Natural killer cell (primary cell): ENCODE measurements at regions of chr19 and their contacts with region 1.

Region 1: DNA sequence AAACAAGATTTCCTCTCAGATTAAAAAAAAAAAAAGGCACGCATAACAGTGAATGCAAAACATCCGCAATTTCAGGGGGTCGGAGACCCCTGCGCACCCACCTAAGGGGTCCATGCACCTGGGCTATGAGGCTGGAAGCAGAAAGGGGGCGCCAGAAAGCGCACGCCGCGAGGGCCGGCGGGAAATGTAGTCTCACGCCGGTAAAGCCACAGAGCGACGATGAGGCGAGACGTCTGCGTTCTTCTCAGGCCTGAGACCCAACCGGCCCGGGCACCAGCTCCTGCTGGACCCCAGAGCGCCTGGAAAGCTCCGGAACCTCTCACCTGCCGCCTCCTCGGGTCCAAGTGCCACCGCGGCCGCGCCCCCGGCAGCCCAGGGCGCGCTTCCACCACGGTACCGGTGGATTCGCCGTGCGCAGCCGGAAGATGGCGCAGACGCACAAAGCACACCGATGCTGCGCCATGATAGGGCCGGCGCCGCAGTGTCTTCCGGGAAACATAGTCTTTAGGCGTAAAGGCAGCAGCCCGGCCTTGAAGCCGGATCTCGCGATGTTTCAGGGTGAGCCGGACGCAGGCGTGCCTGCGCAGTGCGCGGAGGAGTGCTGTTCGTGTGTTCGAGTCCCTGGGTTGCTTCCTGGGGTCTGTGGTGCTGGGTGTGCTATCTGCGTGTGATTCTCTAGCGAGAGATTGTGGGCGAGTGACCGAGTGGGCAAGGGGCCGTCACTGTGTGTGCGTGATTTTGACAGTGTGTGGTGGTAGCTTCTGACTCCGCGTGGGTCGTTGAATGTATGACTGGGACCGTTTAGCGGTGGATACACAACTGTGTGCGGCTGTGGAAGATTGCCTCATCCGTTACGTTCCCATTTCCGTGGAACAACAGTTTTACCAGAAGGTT is at the start of gene ZNF582:
- DNase-seq: peak; percentile 89 to 97
- ATAC-seq: peak; percentile 96 to 98 (median 97)
- H3K4me3 ChIP-seq: peak within 1 kb of the TSS; percentile 68
- H3K4me3 Mint-ChIP-seq: peak within 1 kb of the TSS; percentile 99
- H3K27ac ChIP-seq: peak within 1 kb of the TSS; percentile 97
- H3K27ac Mint-ChIP-seq: peak within 1 kb of the TSS; percentile 97 to 99
- H3K4me1 ChIP-seq: peaks cover 6% of the 10 kb centered on the region
- H3K4me1 Mint-ChIP-seq: peaks cover 11 to 15% of the 10 kb centered on the region in 2 donors
- H3K27me3 ChIP-seq: no peaks in the 10 kb centered on the region
- H3K27me3 Mint-ChIP-seq: no peaks in the 10 kb centered on the region
- CTCF ChIP-seq: peak; percentile 65
- total RNA-seq, gene ZNF582: 1.3 to 3.3 (median 2.8) TPM

Region 2: DNA sequence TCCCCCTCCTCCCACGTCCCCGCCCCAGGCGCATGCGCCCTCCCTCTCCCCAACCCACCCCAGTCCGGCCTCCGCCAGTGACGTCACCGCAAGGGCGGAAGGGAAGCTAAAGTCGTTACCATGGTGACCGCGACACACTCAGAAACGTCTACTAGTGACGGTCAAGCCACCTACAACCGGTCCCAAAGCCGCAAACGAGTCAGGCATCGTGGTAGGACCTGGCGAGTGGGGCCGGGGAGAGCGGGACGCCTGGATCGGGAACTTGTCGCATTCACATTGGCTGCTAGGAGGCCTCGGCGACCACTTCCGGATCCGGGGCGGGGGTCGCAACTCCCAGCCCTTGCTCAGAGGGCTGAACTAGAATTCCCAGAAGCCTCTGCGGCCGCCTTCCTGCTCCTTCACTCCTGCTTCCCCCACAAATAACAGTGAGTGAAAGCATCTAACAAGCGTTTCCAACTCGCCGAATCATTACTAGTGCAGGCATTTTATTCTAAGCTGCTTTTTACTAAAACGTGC is 78.7 kb before region 1 on chr19 and contains the start of gene ZSCAN5A:
- intact Hi-C with region 1: loop called (anchors 1 kb)
- DNase-seq: peak; percentile 94 to 98
- ATAC-seq: peak; percentile 77 to 89 (median 83)
- H3K4me3 ChIP-seq: peak within 1 kb of the TSS; percentile 77
- H3K4me3 Mint-ChIP-seq: peak within 1 kb of the TSS; percentile 98
- H3K27ac ChIP-seq: peak within 1 kb of the TSS; percentile 94
- H3K27ac Mint-ChIP-seq: peak within 1 kb of the TSS; percentile 97 to 98
- H3K4me1 ChIP-seq: peaks cover 13% of the 10 kb centered on the region
- H3K4me1 Mint-ChIP-seq: peaks cover 21 to 38% of the 10 kb centered on the region in 2 donors
- H3K27me3 ChIP-seq: no peaks in the 10 kb centered on the region
- H3K27me3 Mint-ChIP-seq: peaks cover 0 to under 1% of the 10 kb centered on the region in 2 donors
- CTCF ChIP-seq: no peak
- total RNA-seq, gene ZSCAN5A: 6.7 to 10.2 (median 7.9) TPM

Region 3: GRCh38 chr19:56367829-56368711 is 25.3 kb before region 1 on chr19:
- intact Hi-C with region 1: loop called (anchors 1 kb)
- DNase-seq: peak; percentile 84 to 87
- ATAC-seq: peak; percentile 92 to 94 (median 93)
- H3K4me3 ChIP-seq: peak overlapping the region; percentile 64
- H3K4me3 Mint-ChIP-seq: peak overlapping the region; percentile 96
- H3K27ac ChIP-seq: peak overlapping the region; percentile 73
- H3K27ac Mint-ChIP-seq: peak overlapping the region; percentile 92 to 98
- H3K4me1 ChIP-seq: peaks cover 9% of the 10 kb centered on the region
- H3K4me1 Mint-ChIP-seq: peaks cover 26 to 29% of the 10 kb centered on the region in 2 donors
- H3K27me3 ChIP-seq: no peaks in the 10 kb centered on the region
- H3K27me3 Mint-ChIP-seq: no peaks in the 10 kb centered on the region
- CTCF ChIP-seq: peak; percentile 11

Region 4: GRCh38 chr19:56403764-56404704 is 10.7 kb after region 1 on chr19 and contains the start of gene ZNF583:
- intact Hi-C with region 1: loop called (anchors 1 kb)
- DNase-seq: peak; percentile 90 to 95
- ATAC-seq: peak; percentile 57 to 87 (median 78)
- H3K4me3 ChIP-seq: peak within 1 kb of the TSS; percentile 88
- H3K4me3 Mint-ChIP-seq: peak within 1 kb of the TSS; percentile 92
- H3K27ac ChIP-seq: peak within 1 kb of the TSS; percentile 99
- H3K27ac Mint-ChIP-seq: peak within 1 kb of the TSS; percentile 71 to 93
- H3K4me1 ChIP-seq: peaks cover 22% of the 10 kb centered on the region
- H3K4me1 Mint-ChIP-seq: peaks cover 19 to 43% of the 10 kb centered on the region in 2 donors
- H3K27me3 ChIP-seq: no peaks in the 10 kb centered on the region
- H3K27me3 Mint-ChIP-seq: no peaks in the 10 kb centered on the region
- CTCF ChIP-seq: no peak
- total RNA-seq, gene ZNF583: 2.7 to 5.1 (median 3.3) TPM

Region 5: GRCh38 chr19:56538254-56538760 is 144.9 kb after region 1 on chr19:
- intact Hi-C with region 1: loop called (anchors 1 kb)
- DNase-seq: peak; percentile 88 to 91
- ATAC-seq: peak; percentile 89 to 92 (median 90)
- H3K4me3 ChIP-seq: peak overlapping the region; percentile 64
- H3K4me3 Mint-ChIP-seq: peak overlapping the region; percentile 91
- H3K27ac ChIP-seq: peak overlapping the region; percentile 80
- H3K27ac Mint-ChIP-seq: peak overlapping the region; percentile 80 to 95
- H3K4me1 ChIP-seq: peaks cover 19% of the 10 kb centered on the region
- H3K4me1 Mint-ChIP-seq: peaks cover 20 to 36% of the 10 kb centered on the region in 2 donors
- H3K27me3 ChIP-seq: no peaks in the 10 kb centered on the region
- H3K27me3 Mint-ChIP-seq: peaks cover 0 to 2% of the 10 kb centered on the region in 2 donors
- CTCF ChIP-seq: no peak

Region 6: GRCh38 chr19:56619121-56619520 is 225.8 kb after region 1 on chr19:
- intact Hi-C with region 1: no loop called
- DNase-seq: no peak
- ATAC-seq: no peak
- H3K4me3 ChIP-seq: no peak overlapping the region
- H3K4me3 Mint-ChIP-seq: no peak overlapping the region
- H3K27ac ChIP-seq: no peak overlapping the region
- H3K27ac Mint-ChIP-seq: no peak overlapping the region
- H3K4me1 ChIP-seq: no peaks in the 10 kb centered on the region
- H3K4me1 Mint-ChIP-seq: peaks cover 5 to 9% of the 10 kb centered on the region in 2 donors
- H3K27me3 ChIP-seq: no peaks in the 10 kb centered on the region
- H3K27me3 Mint-ChIP-seq: no peaks in the 10 kb centered on the region
- CTCF ChIP-seq: no peak